Breast epithelium (tissue), 4 donors: ENCODE measurements at regions of chr3 and their contacts with region 1.

Region 1: GRCh38 chr3:194540274-194540905 is 53.6 kb upstream of the ATP13A3 start:
- DNase-seq: peak in 1 of 2 donors; percentile 30
- H3K4me3 ChIP-seq: no peak overlapping the region
- H3K27ac ChIP-seq: peak overlapping the region; percentile 45 to 68
- H3K4me1 ChIP-seq: no peaks in the 10 kb centered on the region
- H3K27me3 ChIP-seq: no peaks in the 10 kb centered on the region
- CTCF ChIP-seq: no peak
- POLR2A ChIP-seq: no peak

Region 2: GRCh38 chr3:193673845-193674244 is 866.5 kb before region 1 on chr3:
- intact Hi-C with region 1: loop called (anchors 10 kb)
- DNase-seq: no peak
- H3K4me3 ChIP-seq: no peak overlapping the region
- H3K27ac ChIP-seq: no peak overlapping the region
- H3K4me1 ChIP-seq: no peaks in the 10 kb centered on the region
- H3K27me3 ChIP-seq: no peaks in the 10 kb centered on the region
- CTCF ChIP-seq: peak in 1 of 3 donors; percentile 27
- POLR2A ChIP-seq: no peak

Region 3: GRCh38 chr3:194224471-194225415 is 315.6 kb before region 1 on chr3:
- intact Hi-C with region 1: no loop called
- DNase-seq: no peak
- H3K4me3 ChIP-seq: peak overlapping the region in 2 of 3 donors; percentile 1 to 15
- H3K27ac ChIP-seq: no peak overlapping the region
- H3K4me1 ChIP-seq: peaks cover 3 to 8% of the 10 kb centered on the region in 2 donors
- H3K27me3 ChIP-seq: no peaks in the 10 kb centered on the region
- CTCF ChIP-seq: no peak
- POLR2A ChIP-seq: no peak

Region 4: DNA sequence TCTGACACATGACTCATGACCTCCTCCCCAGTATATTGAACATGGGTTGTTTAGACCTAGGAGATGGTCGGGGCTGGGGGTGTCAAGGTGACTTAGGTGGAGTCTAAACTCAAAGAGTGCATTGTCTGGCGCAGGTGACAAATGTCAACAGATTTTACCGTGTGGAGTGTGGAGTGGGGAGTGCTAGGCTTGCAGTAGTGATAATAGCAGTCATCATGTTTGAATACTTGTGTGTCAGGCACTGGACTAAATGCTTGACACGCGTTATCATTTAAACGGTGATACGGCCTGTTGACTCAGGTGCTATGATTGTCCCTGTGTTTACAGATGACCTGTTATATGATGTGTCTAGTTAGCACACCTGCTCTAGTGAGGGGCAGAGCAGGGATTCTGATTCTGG is 1211.2 kb after region 1 on chr3:
- intact Hi-C with region 1: no loop called
- DNase-seq: no peak
- H3K4me3 ChIP-seq: no peak overlapping the region
- H3K27ac ChIP-seq: no peak overlapping the region
- H3K4me1 ChIP-seq: no peaks in the 10 kb centered on the region
- H3K27me3 ChIP-seq: no peaks in the 10 kb centered on the region
- CTCF ChIP-seq: no peak
- POLR2A ChIP-seq: no peak